Heart left ventricle (tissue), 16 donors: ENCODE measurements at regions of chr19 and their contacts with region 1.

Region 1: DNA sequence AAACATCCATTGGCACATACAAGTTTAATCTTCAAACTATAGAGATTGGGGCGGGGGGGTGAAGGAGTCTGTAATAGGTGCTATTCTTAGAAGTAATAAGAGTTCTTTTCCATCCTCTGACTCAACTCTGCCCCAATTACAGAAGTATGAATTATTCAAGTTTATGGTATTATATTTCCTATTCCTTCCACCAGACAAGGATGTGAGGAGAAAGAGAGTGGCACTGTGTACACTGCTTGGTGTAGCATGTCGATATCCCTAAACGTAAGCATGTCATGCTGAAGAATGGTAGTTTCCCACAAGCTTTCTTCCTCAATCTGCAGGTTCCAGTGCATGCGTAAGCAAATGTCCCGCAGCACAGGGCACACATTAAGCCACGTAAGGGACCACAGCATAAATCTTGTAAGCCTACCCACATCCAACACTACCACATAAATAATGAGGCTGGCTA is 14.1 kb downstream of the BRD4 start:
- DNase-seq: no peak
- ATAC-seq: peak in 3 of 4 donors; percentile 26 to 32 (median 31)
- H3K4me3 ChIP-seq: no peak overlapping the region
- H3K27ac ChIP-seq: peak overlapping the region in 8 of 12 donors; percentile 5 to 55 (median 32)
- H3K4me1 ChIP-seq: peaks cover 26 to 100% (median 95%) of the 10 kb centered on the region in 12 donors
- H3K27me3 ChIP-seq: no peaks in the 10 kb centered on the region
- CTCF ChIP-seq: no peak
- POLR2A ChIP-seq: no peak

Region 2: GRCh38 chr19:15280915-15281683 is 37.2 kb before region 1 on chr19:
- intact Hi-C with region 1: loop called in 2 of 10 experiments (anchors 5 kb)
- DNase-seq: peak; percentile 81 to 92 (median 90)
- ATAC-seq: peak; percentile 82 to 92 (median 88)
- H3K4me3 ChIP-seq: peak overlapping the region in 2 of 12 donors; percentile 10 to 13
- H3K27ac ChIP-seq: peak overlapping the region in 11 of 12 donors; percentile 14 to 83 (median 58)
- H3K4me1 ChIP-seq: peaks cover 45 to 100% (median 96%) of the 10 kb centered on the region in 12 donors
- H3K27me3 ChIP-seq: no peaks in the 10 kb centered on the region
- CTCF ChIP-seq: peak in 8 of 12 donors; percentile 10 to 53 (median 22)
- POLR2A ChIP-seq: no peak